Calu3 (cell line): ENCODE measurements at regions of chr22 and their contacts with region 1.

Region 1: DNA sequence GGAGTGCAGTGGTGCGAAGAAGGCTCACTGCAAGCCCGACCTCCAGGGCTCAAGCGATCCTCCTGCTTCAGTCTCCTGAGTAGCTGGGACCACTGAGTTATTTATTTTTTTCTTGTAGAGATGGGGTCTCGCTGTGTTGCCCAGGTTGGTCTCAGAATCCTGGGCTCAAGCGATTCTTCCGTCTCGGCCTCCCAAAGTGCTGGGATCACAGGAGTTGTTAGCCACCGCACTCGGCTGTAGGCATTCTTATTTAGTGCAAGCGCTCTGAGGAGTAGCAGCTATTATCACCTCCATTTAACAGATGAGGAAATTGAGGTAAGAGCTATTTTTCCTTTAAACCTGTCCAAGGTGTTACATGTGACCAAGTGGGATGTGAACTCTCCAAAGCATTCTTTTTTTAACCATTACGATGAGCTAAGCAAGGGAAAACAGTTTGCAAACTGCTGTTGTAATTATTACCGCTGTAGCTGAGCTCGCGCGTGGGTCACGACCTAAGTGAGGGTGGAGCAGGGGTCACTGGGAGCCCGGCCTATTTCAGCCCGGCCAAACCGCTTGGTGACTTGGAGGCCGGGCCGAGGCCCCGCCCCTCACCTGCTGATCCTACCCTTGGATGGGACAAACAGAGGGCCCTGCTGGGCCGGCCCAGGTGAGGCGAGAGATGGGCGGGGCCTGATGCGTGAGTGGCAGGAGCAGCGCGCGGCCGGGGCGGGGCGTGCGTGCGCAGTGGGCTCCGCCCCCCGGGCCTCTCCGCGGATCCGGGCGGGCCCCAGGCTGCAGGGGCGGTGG is 449 bp upstream of the KREMEN1 start:
- DNase-seq: peak; percentile 98
- H3K4me3 Mint-ChIP-seq: peak overlapping the region; percentile 76
- H3K27ac Mint-ChIP-seq: no peak overlapping the region
- H3K4me1 Mint-ChIP-seq: no peaks in the 10 kb centered on the region
- H3K27me3 Mint-ChIP-seq: peaks cover 58% of the 10 kb centered on the region
- CTCF ChIP-seq: no peak

Region 2: DNA sequence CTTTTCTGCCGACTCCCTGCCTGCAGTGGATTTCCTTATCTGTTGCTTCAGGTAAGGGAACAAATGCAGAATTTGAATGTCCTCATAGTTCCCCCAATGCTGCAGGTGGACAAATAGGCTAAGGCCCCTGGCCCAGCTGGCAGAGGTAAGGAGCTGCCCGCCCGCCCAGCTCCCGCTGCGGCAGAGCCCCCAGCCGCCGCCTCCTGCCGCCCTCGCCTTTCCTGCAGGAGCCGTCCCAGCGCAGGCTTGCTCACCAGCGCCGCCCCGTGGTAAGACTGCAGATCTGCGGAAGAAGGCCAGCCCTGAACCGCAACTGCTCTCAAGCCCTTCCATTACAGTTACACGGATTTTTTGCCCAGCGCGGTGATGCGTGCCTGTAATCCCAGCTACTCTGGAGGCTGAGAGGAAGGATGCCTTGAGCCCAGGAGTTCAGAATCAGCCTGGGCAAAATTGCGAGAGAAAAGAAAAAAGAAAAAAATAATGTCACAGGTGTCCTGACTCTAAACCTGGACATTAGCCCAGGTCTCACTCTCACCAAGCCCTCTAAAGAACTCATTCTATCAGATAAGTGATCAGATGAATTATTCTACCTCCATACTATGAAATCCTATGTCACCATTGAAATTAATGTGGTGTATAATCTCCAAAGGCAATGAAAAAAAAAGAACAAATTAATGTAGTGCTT is 82.1 kb after region 1 on chr22:
- CTCF ChIA-PET with region 1: no interaction called
- intact Hi-C with region 1: loop called (anchors 10 kb)
- DNase-seq: peak; percentile 87
- H3K4me3 Mint-ChIP-seq: peak overlapping the region; percentile 46
- H3K27ac Mint-ChIP-seq: no peak overlapping the region
- H3K4me1 Mint-ChIP-seq: peaks cover 6% of the 10 kb centered on the region
- H3K27me3 Mint-ChIP-seq: peaks cover 28% of the 10 kb centered on the region
- CTCF ChIP-seq: peak; percentile 94